Colonic mucosa (tissue), 4 donors: ENCODE measurements at regions of chr5 and their contacts with region 1.

Region 1: DNA sequence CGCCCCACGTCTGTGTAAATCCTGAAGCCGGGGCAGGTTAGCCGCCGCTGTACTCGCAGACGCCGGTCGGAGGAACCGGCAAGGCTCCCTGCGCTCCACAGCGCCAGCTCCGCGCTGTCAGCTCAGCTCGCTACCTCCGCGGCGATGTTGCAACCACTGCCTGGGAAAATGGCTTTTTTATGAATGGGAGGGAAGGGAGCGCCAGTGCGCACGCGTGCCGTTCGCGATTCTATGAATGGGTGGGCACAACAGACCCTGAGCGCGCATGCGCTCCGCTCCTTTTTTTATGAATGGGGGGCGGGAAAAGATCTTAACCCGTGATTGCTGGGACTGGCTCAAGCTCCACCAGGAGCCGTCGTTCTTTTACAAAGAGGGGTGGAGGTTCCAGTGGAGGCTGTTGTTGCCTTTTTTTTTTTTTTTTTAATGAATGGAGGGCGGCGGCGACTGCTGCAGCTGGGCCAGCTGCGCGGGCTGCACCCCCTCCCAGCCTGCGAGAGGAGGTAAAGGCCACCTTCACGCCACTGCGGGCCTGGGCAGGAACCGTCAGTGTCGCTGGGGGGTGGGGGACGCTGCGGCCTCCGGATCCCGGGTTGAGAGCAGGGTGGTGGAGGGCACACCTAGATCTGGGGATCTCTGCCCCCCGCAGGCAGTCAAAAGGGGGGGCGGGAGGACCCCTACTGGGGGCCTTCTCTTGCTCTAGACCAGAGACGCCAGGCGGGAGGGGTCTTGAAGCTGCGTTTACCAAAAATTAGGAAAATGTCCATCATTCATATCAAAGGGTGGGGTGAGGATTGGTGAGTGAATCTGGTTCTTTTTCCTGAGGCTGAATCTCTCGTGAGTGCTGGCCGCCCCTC is at the start of gene SPRY4:
- DNase-seq: peak; percentile 94
- H3K4me3 ChIP-seq: peak within 1 kb of the TSS; percentile 77
- H3K27ac ChIP-seq: peak within 1 kb of the TSS; percentile 92
- H3K4me1 ChIP-seq: peaks cover 6% of the 10 kb centered on the region
- H3K27me3 ChIP-seq: no peaks in the 10 kb centered on the region
- CTCF ChIP-seq: no peak
- total RNA-seq, gene SPRY4: 8.4 to 21.5 TPM

Region 2: DNA sequence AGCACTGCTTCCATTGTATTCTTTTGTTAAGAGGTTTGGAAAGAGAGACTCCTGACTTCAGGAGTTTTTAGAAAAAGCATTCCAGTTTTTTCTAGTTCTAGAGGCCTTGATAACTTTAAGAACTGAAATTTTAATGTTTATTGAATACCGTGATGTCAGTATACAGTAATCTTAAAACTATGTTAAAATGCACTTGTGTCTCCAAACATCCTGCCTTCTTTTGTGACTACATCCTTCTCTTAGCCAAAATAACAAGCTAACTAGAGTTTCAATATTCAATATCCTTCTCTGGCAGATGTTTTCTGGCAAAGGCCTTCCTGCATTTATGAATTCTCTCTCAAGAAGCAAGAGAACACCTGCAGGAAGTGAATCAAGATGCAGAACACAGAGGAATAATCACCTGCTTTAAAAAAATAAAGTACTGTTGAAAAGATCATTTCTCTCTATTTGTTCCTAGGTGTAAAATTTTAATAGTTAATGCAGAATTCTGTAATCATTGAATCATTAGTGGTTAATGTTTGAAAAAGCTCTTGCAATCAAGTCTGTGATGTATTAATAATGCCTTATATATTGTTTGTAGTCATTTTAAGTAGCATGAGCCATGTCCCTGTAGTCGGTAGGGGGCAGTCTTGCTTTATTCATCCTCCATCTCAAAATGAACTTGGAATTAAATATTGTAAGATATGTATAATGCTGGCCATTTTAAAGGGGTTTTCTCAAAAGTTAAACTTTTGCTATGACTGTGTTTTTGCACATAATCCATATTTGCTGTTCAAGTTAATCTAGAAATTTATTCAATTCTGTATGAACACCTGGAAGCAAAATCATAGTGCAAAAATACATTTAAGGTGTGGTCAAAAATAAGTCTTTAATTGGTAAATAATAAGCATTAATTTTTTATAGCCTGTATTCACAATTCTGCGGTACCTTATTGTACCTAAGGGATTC is 173.4 kb before region 1 on chr5:
- intact Hi-C with region 1: loop called (anchors 10 kb)
- DNase-seq: peak; percentile 67
- H3K4me3 ChIP-seq: no peak overlapping the region
- H3K27ac ChIP-seq: no peak overlapping the region
- H3K4me1 ChIP-seq: no peaks in the 10 kb centered on the region
- H3K27me3 ChIP-seq: no peaks in the 10 kb centered on the region
- CTCF ChIP-seq: peak; percentile 87

Region 3: GRCh38 chr5:142726188-142726731 is 401.2 kb after region 1 on chr5:
- intact Hi-C with region 1: no loop called
- DNase-seq: no peak
- H3K4me3 ChIP-seq: no peak overlapping the region
- H3K27ac ChIP-seq: no peak overlapping the region
- H3K4me1 ChIP-seq: no peaks in the 10 kb centered on the region
- H3K27me3 ChIP-seq: no peaks in the 10 kb centered on the region
- CTCF ChIP-seq: no peak